ENCODE measurements at regions of chr4 and their contacts with region 1.

Region 1: DNA sequence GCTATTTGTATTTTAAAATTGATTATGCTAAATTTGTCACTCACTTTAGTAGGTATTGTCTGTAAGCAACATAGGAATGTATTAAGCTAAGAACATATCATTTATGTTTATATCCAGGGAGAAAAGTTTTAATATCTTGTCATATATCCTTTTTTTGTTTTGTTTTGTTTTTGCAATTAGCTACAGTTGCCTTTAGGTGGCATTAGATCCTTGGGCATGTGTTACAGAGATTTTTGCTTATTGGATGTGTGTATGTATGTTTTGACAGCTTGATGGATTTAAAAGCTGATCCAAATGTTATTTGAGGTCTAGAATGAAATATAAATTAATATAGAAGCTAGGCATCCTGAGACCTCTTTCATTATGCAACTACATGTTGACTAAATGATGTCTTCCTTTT is 36.1 kb upstream of the OTUD4 start:
- DNase-seq: no peak
- ATAC-seq: no peak
- H3K4me3 ChIP-seq: no peak overlapping the region
- H3K4me1 ChIP-seq: no peaks in the 10 kb centered on the region
- CTCF ChIP-seq: no peak

Region 2: GRCh38 chr4:145618932-145619638 is 402.6 kb after region 1 on chr4 and contains the start of gene MMAA:
- intact Hi-C with region 1: loop called in 1 of 2 experiments (anchors 10 kb)
- DNase-seq: peak; percentile 95 to 97 (median 97)
- ATAC-seq: peak; percentile 99
- H3K4me3 ChIP-seq: peak within 1 kb of the TSS; percentile 54
- H3K4me1 ChIP-seq: peaks cover 12% of the 10 kb centered on the region
- CTCF ChIP-seq: no peak
- total RNA-seq, gene MMAA: 12.9 to 20.8 (median 18.1) TPM